GM12878 (cell line): ENCODE measurements at regions of chr6 and their contacts with region 1.

Region 1: DNA sequence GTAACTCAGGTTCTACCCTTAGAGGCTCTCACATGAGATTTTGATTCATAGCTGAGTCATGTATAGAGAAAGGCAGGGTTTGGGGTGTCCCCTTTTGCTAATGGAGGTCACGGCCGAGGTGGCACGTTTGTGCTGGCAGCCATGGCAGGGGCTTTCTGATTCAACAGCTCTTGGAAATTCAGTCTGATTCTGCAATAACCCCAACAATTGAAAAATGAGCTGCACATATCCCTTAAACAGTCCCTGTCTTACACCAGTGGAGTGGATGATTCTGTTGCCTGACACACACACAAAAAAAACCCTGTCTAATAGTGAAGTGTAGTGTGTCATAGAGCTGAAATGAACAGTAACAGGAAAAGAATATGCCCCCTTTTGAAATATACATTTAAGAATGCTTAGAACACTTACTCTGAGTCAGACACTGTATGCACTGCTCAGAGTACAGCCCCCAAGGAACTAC is 40.4 kb upstream of the ARG1 start:
- DNase-seq: peak; percentile 23
- ATAC-seq: peak; percentile 93
- H3K4me3 ChIP-seq: no peak overlapping the region
- H3K27ac ChIP-seq: no peak overlapping the region
- H3K4me1 ChIP-seq: no peaks in the 10 kb centered on the region
- H3K27me3 ChIP-seq: no peaks in the 10 kb centered on the region
- CTCF ChIP-seq: no peak
- EP300 ChIP-seq: no peak
- POLR2A ChIP-seq: no peak
- RAD21 ChIP-seq: no peak

Region 2: GRCh38 chr6:131182991-131183425 is 349.6 kb before region 1 on chr6:
- CTCF ChIA-PET with region 1: interaction called, 25 read pairs
- POLR2A ChIA-PET with region 1: no interaction called
- RAD21 ChIA-PET with region 1: interaction called, 3 read pairs
- SMC1A ChIA-PET with region 1: interaction called, 4 read pairs
- in situ Hi-C with region 1: no loop called
- intact Hi-C with region 1: no loop called
- DNase-seq: no peak
- ATAC-seq: peak; percentile 66
- H3K4me3 ChIP-seq: no peak overlapping the region
- H3K27ac ChIP-seq: no peak overlapping the region
- H3K4me1 ChIP-seq: no peaks in the 10 kb centered on the region
- H3K27me3 ChIP-seq: no peaks in the 10 kb centered on the region
- CTCF ChIP-seq: peak; percentile 19 to 45 (median 27); a peak in 3 of 6 replicates
- EP300 ChIP-seq: no peak
- POLR2A ChIP-seq: no peak
- RAD21 ChIP-seq: peak; percentile 39

Region 3: DNA sequence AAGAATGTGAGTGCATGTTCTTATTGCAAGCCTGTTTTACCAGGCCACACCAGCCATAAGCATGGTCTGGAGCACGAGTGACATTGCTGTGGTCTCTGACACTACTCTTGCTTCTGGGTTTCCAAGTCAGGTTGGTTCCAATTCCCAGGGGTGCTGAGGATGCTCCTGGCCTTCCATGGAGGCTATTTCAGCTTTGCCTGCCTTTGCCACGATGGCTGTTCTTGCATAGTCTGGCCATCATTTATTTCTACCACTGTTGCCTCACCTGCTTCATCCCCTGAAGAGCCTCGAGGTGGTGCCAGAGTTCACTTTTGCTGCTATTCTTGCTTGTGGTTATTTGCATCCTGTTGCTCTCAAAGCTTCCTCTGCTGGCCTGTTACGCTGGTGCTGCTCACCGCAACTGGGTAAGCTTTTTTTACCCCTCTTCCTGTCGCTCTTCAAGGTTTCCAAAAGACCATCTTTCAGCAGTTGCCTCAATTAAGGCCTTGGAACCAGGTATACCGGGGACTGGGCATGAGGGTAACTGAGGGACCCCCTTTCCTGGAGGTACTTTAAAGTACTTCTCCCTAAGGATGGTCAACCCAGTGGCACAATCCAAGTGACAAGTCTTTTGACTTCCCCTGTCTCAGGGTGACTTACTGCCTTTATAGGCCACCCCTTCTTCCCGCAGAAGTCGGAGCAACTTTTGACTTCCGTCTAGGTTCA is 332.9 kb before region 1 on chr6:
- CTCF ChIA-PET with region 1: interaction called, 57 read pairs
- POLR2A ChIA-PET with region 1: no interaction called
- RAD21 ChIA-PET with region 1: interaction called, 24 read pairs
- SMC1A ChIA-PET with region 1: interaction called, 32 read pairs
- in situ Hi-C with region 1: loop called (anchors 5 kb)
- intact Hi-C with region 1: loop called (anchors 1 kb)
- DNase-seq: peak; percentile 71
- ATAC-seq: peak; percentile 100
- H3K4me3 ChIP-seq: no peak overlapping the region
- H3K27ac ChIP-seq: peak overlapping the region; percentile 15; the same call in 1 of the 2 replicates
- H3K4me1 ChIP-seq: peaks cover 9% of the 10 kb centered on the region
- H3K27me3 ChIP-seq: no peaks in the 10 kb centered on the region
- CTCF ChIP-seq: peak; percentile 84 to 89 (median 89)
- EP300 ChIP-seq: no peak
- POLR2A ChIP-seq: no peak
- RAD21 ChIP-seq: peak; percentile 90

Region 4: GRCh38 chr6:131451321-131452144 is 81.1 kb before region 1 on chr6:
- CTCF ChIA-PET with region 1: no interaction called
- POLR2A ChIA-PET with region 1: no interaction called
- RAD21 ChIA-PET with region 1: no interaction called
- SMC1A ChIA-PET with region 1: no interaction called
- in situ Hi-C with region 1: no loop called
- intact Hi-C with region 1: no loop called
- DNase-seq: no peak
- ATAC-seq: no peak
- H3K4me3 ChIP-seq: no peak overlapping the region
- H3K27ac ChIP-seq: no peak overlapping the region
- H3K4me1 ChIP-seq: no peaks in the 10 kb centered on the region
- H3K27me3 ChIP-seq: no peaks in the 10 kb centered on the region; a peak in 1 of 4 replicates
- CTCF ChIP-seq: no peak
- EP300 ChIP-seq: no peak
- POLR2A ChIP-seq: no peak
- RAD21 ChIP-seq: no peak

Region 5: DNA sequence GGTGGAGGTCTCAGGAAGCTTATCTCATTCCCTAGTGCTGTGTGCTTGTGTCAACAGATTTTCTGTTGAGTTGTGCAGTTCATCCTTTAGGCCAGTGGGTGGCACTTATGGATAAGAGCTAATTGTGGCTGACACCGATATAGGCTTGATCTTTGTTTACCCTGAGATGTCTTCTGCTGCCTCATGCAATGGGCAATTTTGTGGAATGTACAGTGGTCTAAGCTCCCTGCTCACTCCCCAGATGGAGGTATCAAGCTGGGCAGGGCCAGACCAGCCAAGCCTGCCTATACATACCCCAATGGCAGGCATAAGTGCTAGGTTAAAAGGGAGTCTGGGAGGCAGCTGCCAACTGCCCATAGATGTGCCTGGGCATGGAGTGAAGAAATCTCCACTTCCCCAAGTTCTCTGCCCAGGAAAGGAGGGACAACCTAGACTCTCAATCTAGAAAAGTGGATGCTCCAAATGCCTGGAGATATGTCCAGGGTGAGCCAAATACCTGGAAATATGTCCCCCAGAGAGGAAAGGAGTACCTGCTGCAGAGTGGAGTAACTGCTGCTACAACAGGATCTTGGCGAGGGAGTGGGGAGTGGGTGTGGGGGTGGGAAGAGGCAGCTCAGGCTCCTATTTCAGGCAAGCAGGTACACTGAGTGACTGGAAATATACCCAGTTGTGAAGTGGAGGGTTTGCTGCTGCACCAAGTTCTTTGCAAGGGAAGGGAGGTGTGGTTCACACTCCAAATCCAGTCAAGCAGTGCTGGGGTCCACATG is 12.8 kb before region 1 on chr6:
- CTCF ChIA-PET with region 1: interaction called, 43 read pairs
- POLR2A ChIA-PET with region 1: no interaction called
- RAD21 ChIA-PET with region 1: interaction called, 14 read pairs
- SMC1A ChIA-PET with region 1: interaction called, 16 read pairs
- in situ Hi-C with region 1: no loop called
- intact Hi-C with region 1: no loop called
- DNase-seq: no peak
- ATAC-seq: peak; percentile 96
- H3K4me3 ChIP-seq: no peak overlapping the region
- H3K27ac ChIP-seq: no peak overlapping the region
- H3K4me1 ChIP-seq: no peaks in the 10 kb centered on the region
- H3K27me3 ChIP-seq: no peaks in the 10 kb centered on the region
- CTCF ChIP-seq: peak; percentile 56 to 70 (median 66); a peak in 5 of 6 replicates
- EP300 ChIP-seq: no peak
- POLR2A ChIP-seq: no peak
- RAD21 ChIP-seq: peak; percentile 64